PC-3 (cell line): ENCODE measurements at regions of chrX and their contacts with region 1.

Region 1: GRCh38 chrX:129872524-129872923 is 28.8 kb upstream of the ZDHHC9 start:
- DNase-seq: no peak
- ATAC-seq: no peak
- H3K4me3 ChIP-seq: no peak overlapping the region
- H3K27ac ChIP-seq: no peak overlapping the region
- H3K4me1 ChIP-seq: peaks cover 16% of the 10 kb centered on the region
- H3K27me3 ChIP-seq: no peaks in the 10 kb centered on the region
- CTCF ChIP-seq: no peak

Region 2: DNA sequence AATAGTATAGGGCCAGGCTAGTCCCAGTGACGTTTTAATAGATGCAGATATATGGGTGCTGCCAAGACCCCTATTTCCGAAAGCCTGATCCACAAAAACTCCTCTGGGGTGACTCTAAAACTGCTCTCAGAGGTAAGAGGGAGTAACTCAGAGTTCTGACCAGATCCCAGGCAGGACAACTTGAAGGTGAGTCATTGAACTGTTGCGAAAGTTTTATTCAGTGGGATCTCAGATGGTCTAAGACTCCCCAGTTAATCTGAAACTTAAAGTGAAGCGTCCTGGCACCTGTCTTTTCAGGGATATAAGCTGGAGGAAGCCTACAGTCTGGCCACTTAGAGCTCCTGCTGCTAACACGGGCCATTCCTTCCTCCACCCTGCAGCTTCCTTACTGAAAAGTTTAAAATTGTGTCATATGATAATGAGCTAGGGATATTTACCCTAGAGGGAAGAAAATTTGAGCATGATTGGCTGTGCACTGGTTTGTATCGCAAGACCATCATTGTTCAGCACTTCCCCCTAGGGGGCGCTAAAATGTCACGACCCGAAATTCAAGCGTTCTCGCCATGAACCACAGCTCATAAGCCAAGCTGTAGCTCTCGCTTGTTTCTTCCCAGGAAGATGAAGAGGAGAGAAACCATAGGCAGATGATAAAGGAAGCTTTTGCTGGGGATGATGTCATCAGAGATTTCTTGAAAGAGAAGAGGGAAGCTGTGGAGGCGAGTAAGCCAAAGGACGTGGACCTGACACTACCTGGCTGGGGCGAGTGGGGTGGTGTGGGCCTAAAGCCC is 53.0 kb after region 1 on chrX:
- CTCF ChIA-PET with region 1: no interaction called
- POLR2A ChIA-PET with region 1: no interaction called
- intact Hi-C with region 1: no loop called
- DNase-seq: peak; percentile 69
- ATAC-seq: peak; percentile 80
- H3K4me3 ChIP-seq: no peak overlapping the region
- H3K27ac ChIP-seq: no peak overlapping the region
- H3K4me1 ChIP-seq: no peaks in the 10 kb centered on the region
- H3K27me3 ChIP-seq: no peaks in the 10 kb centered on the region
- CTCF ChIP-seq: peak; percentile 71

Region 3: DNA sequence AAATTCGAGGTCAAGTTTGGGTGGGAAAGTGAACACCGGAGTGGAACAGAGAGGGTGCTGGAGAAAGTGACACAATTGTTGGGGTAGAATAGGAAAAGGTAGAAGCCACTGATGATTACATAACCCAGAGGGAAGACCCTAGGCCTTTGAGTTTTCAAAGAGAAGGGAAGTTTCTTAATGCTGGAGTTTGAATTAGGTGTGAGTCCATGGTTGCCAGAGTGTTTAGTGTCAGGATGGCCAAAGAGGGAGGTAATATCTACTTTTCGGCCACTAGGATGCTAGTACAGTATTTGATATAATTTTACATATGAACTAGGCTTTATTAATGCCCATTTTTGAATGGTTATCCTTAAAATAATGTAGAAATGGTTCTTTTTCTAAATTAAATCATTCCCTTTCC is 115.3 kb after region 1 on chrX:
- CTCF ChIA-PET with region 1: no interaction called
- POLR2A ChIA-PET with region 1: no interaction called
- intact Hi-C with region 1: no loop called
- DNase-seq: no peak
- ATAC-seq: no peak
- H3K4me3 ChIP-seq: no peak overlapping the region
- H3K27ac ChIP-seq: no peak overlapping the region
- H3K4me1 ChIP-seq: no peaks in the 10 kb centered on the region; the same call in 1 of the 2 replicates
- H3K27me3 ChIP-seq: no peaks in the 10 kb centered on the region
- CTCF ChIP-seq: no peak

Region 4: DNA sequence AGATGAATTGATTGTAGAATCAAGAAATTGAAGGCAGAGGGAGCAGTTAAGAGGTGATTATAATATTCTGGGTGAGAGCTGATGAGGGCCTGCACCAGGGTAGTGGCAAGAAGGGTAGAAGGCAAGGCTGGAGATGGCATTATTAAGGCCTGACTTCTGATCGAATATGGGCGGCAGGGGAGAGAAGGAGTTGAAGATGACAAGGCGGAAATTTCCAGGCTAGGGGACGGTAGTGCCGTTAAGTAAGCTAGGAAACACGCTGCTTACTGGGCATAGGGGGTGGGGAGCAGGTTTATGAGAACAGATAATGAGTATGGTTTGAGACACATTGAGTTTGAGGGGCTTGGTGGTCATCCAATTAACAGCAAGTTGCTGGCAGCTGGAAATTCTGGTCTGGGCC is 129.4 kb after region 1 on chrX:
- CTCF ChIA-PET with region 1: no interaction called
- POLR2A ChIA-PET with region 1: interaction called, 12 read pairs
- intact Hi-C with region 1: no loop called
- DNase-seq: no peak
- ATAC-seq: no peak
- H3K4me3 ChIP-seq: no peak overlapping the region
- H3K27ac ChIP-seq: no peak overlapping the region
- H3K4me1 ChIP-seq: no peaks in the 10 kb centered on the region
- H3K27me3 ChIP-seq: no peaks in the 10 kb centered on the region
- CTCF ChIP-seq: no peak